Breast epithelium (tissue), 4 donors: ENCODE measurements at regions of chr3 and their contacts with region 1.

Region 1: GRCh38 chr3:172181932-172182586 is 142.7 kb downstream of the FNDC3B start:
- DNase-seq: no peak
- H3K4me3 ChIP-seq: no peak overlapping the region
- H3K27ac ChIP-seq: peak overlapping the region; percentile 21 to 41
- H3K4me1 ChIP-seq: peaks cover 0 to 7% of the 10 kb centered on the region in 2 donors
- H3K27me3 ChIP-seq: no peaks in the 10 kb centered on the region
- CTCF ChIP-seq: no peak
- POLR2A ChIP-seq: no peak

Region 2: GRCh38 chr3:172057059-172057458 is 125.0 kb before region 1 on chr3:
- intact Hi-C with region 1: no loop called
- DNase-seq: no peak
- H3K4me3 ChIP-seq: no peak overlapping the region
- H3K27ac ChIP-seq: peak overlapping the region in 1 of 2 donors; percentile 43
- H3K4me1 ChIP-seq: peaks cover 0 to 7% of the 10 kb centered on the region in 2 donors
- H3K27me3 ChIP-seq: no peaks in the 10 kb centered on the region
- CTCF ChIP-seq: no peak
- POLR2A ChIP-seq: no peak

Region 3: GRCh38 chr3:172227340-172228035 is 45.4 kb after region 1 on chr3:
- intact Hi-C with region 1: loop called (anchors 2 kb)
- DNase-seq: no peak
- H3K4me3 ChIP-seq: no peak overlapping the region
- H3K27ac ChIP-seq: peak overlapping the region in 1 of 2 donors; percentile 27
- H3K4me1 ChIP-seq: no peaks in the 10 kb centered on the region
- H3K27me3 ChIP-seq: no peaks in the 10 kb centered on the region
- CTCF ChIP-seq: no peak
- POLR2A ChIP-seq: no peak